Activated CD4-positive, alpha-beta T cell treated with anti-CD3 and anti-CD28 coated beads for 36 hours (primary cell): ENCODE measurements at regions of chr10 and their contacts with region 1.

Region 1: GRCh38 chr10:71029411-71029892 is 141.1 kb upstream of the PCBD1 start:
- DNase-seq: no peak
- ATAC-seq: no peak
- H3K4me3 Mint-ChIP-seq: no peak overlapping the region
- H3K27ac Mint-ChIP-seq: no peak overlapping the region
- H3K4me1 Mint-ChIP-seq: no peaks in the 10 kb centered on the region
- H3K27me3 Mint-ChIP-seq: peaks cover 7% of the 10 kb centered on the region

Region 2: GRCh38 chr10:71099731-71100361 is 70.4 kb after region 1 on chr10:
- CTCF ChIA-PET with region 1: no interaction called
- POLR2A ChIA-PET with region 1: no interaction called
- intact Hi-C with region 1: loop called in 1 of 2 experiments (anchors 2 kb)
- DNase-seq: no peak
- ATAC-seq: no peak
- H3K4me3 Mint-ChIP-seq: no peak overlapping the region
- H3K27ac Mint-ChIP-seq: no peak overlapping the region
- H3K4me1 Mint-ChIP-seq: peaks cover 5% of the 10 kb centered on the region
- H3K27me3 Mint-ChIP-seq: peaks cover 28% of the 10 kb centered on the region